ENCODE measurements at regions of chr9 and their contacts with region 1.

Region 1: GRCh38 chr9:97803167-97804058 is 49.6 kb upstream of the FOXE1 start:
- DNase-seq: peak; percentile 60 to 90 (median 72)
- ATAC-seq: peak; percentile 93
- H3K4me3 ChIP-seq: peak overlapping the region; percentile 45
- H3K4me3 Mint-ChIP-seq: peak overlapping the region; percentile 84
- H3K27ac ChIP-seq: no peak overlapping the region
- H3K27ac Mint-ChIP-seq: peak overlapping the region; percentile 69
- H3K4me1 ChIP-seq: peaks cover 14% of the 10 kb centered on the region
- H3K4me1 Mint-ChIP-seq: peaks cover 5% of the 10 kb centered on the region
- H3K27me3 ChIP-seq: peaks cover 4 to 9% of the 10 kb centered on the region in 2 experiments
- H3K27me3 Mint-ChIP-seq: peaks cover 32% of the 10 kb centered on the region
- CTCF ChIP-seq: no peak

Region 2: GRCh38 chr9:97703437-97704344 is 99.7 kb before region 1 on chr9:
- CTCF ChIA-PET with region 1: no interaction called
- POLR2A ChIA-PET with region 1: no interaction called
- intact Hi-C with region 1: loop called (anchors 5 to 10 kb)
- DNase-seq: peak in 5 of 14 experiments; percentile 11 to 45 (median 24)
- ATAC-seq: peak; percentile 58
- H3K4me3 ChIP-seq: no peak overlapping the region
- H3K4me3 Mint-ChIP-seq: no peak overlapping the region
- H3K27ac ChIP-seq: no peak overlapping the region
- H3K27ac Mint-ChIP-seq: peak overlapping the region; percentile 68
- H3K4me1 ChIP-seq: peaks cover 29% of the 10 kb centered on the region
- H3K4me1 Mint-ChIP-seq: peaks cover 20% of the 10 kb centered on the region
- H3K27me3 ChIP-seq: no peaks in the 10 kb centered on the region
- H3K27me3 Mint-ChIP-seq: peaks cover 9% of the 10 kb centered on the region
- CTCF ChIP-seq: no peak

Region 3: DNA sequence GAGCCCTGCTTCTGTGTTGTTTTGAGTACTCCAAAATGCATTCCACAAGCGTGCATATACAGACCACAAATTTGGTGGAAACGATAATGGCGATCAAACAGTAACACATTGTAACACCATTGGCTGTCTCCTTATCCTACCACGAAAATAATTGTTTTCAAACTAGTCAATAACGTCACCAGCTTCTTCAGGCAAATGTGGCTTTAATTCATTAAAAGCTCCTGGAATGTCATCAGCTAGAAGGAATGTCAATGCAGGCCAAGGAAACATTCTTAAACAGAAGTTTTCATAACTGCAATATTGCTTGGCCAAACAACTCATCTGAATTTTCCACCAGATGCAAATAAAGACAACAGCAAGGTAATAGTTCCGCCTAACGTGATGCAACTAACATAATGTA is 34.7 kb before region 1 on chr9:
- CTCF ChIA-PET with region 1: no interaction called
- POLR2A ChIA-PET with region 1: no interaction called
- intact Hi-C with region 1: no loop called
- DNase-seq: no peak
- ATAC-seq: no peak
- H3K4me3 ChIP-seq: no peak overlapping the region
- H3K4me3 Mint-ChIP-seq: no peak overlapping the region
- H3K27ac ChIP-seq: no peak overlapping the region
- H3K27ac Mint-ChIP-seq: no peak overlapping the region
- H3K4me1 ChIP-seq: no peaks in the 10 kb centered on the region
- H3K4me1 Mint-ChIP-seq: no peaks in the 10 kb centered on the region
- H3K27me3 ChIP-seq: peaks cover 0 to 5% of the 10 kb centered on the region in 2 experiments
- H3K27me3 Mint-ChIP-seq: peaks cover 40% of the 10 kb centered on the region
- CTCF ChIP-seq: no peak

Region 4: DNA sequence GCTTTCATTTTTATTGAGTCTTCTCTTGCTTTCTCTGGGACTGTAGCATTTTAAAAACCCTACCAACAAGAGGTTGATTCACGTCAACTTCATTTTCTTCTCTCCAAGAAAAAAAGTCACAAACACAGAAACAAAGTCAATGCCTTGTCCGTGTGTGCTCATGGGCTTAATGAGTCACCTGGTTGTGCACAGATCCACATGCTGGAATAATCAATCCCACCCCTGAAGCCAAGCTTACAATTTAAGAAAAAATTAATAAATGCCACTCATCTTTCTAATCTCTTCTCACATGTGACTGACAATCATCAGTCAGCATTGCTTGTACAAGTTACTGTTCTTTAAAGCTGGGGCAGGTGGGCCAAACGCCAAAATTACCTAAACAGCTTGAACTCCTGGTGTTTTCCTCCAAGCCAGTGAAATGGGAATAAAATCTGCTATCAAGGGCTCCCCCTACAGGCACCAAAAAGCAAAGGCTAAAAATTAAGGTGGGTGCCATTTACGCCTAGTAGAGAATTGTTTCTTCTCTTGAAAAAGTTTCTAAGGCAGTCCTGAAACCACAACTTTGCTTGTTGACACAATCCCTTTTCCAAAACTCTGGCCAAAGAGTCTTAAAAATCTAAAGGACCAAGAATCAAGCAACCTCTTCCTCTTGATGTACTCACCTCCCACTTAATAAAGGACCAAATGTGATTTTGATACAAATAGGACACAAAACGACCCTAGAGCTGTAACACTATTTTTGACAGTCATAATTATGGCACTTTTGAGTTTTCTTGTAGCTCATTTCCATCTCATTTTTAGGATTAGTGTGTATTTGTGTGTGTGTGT is 97.5 kb after region 1 on chr9:
- CTCF ChIA-PET with region 1: no interaction called
- POLR2A ChIA-PET with region 1: no interaction called
- intact Hi-C with region 1: loop called in 1 of 2 experiments (anchors 5 kb)
- DNase-seq: peak in 4 of 14 experiments; percentile 57 to 79 (median 70)
- ATAC-seq: no peak
- H3K4me3 ChIP-seq: no peak overlapping the region
- H3K4me3 Mint-ChIP-seq: peak overlapping the region; percentile 22
- H3K27ac ChIP-seq: peak overlapping the region in 1 of 2 donors; percentile 7
- H3K27ac Mint-ChIP-seq: peak overlapping the region; percentile 96
- H3K4me1 ChIP-seq: peaks cover 54% of the 10 kb centered on the region
- H3K4me1 Mint-ChIP-seq: peaks cover 71% of the 10 kb centered on the region
- H3K27me3 ChIP-seq: no peaks in the 10 kb centered on the region
- H3K27me3 Mint-ChIP-seq: no peaks in the 10 kb centered on the region
- CTCF ChIP-seq: peak; percentile 81

Region 5: DNA sequence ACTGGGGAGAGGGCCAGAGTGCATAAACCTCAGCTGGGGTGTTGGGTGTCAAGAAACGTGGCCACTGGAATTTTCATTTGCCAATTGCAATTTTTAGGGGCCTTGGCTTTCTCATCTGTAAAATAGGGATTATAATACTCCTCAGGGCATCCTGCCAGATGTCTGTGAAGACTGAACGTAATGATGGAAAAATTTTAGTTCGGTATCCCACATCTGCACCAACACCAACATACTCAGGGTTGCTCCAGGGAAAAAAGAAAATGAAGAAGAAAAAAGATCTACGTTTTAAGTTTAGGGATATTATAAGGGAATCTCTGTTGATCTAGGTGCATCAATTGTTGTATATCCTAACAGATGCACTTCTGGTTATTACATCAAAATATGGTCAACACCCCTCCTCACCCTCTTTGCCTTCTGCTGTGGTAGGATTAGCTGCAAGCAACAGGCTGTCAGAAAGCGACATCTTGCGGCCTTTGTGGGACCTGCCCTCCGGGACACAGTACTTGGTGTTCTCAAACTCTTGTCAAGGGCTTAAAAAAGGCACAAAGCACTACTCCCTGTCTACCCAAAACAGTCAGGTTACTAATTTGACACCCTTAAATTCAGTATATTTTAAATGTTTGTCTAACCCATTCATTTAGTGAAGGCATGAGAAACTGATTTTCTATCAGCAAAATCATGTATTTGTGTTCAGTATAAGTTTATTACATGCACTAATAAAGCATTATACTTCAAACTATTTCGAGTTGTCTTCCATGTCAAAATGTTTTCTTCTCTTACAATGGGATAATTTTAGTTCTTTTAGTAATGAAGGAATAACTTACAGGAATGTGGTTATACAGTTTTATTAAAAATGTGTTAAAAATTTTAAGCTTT is 460.3 kb after region 1 on chr9:
- CTCF ChIA-PET with region 1: no interaction called
- POLR2A ChIA-PET with region 1: no interaction called
- intact Hi-C with region 1: loop called in 1 of 2 experiments (anchors 5 kb)
- DNase-seq: peak; percentile 73 to 90 (median 82)
- ATAC-seq: peak; percentile 100
- H3K4me3 ChIP-seq: no peak overlapping the region
- H3K4me3 Mint-ChIP-seq: no peak overlapping the region
- H3K27ac ChIP-seq: no peak overlapping the region
- H3K27ac Mint-ChIP-seq: no peak overlapping the region
- H3K4me1 ChIP-seq: no peaks in the 10 kb centered on the region
- H3K4me1 Mint-ChIP-seq: no peaks in the 10 kb centered on the region
- H3K27me3 ChIP-seq: no peaks in the 10 kb centered on the region
- H3K27me3 Mint-ChIP-seq: peaks cover 9% of the 10 kb centered on the region
- CTCF ChIP-seq: peak; percentile 97